Activated naive CD4-positive, alpha-beta T cell treated with anti-CD3 and anti-CD28 coated beads for 36 hours (primary cell): ENCODE measurements at regions of chr3 and their contacts with region 1.

Region 1: DNA sequence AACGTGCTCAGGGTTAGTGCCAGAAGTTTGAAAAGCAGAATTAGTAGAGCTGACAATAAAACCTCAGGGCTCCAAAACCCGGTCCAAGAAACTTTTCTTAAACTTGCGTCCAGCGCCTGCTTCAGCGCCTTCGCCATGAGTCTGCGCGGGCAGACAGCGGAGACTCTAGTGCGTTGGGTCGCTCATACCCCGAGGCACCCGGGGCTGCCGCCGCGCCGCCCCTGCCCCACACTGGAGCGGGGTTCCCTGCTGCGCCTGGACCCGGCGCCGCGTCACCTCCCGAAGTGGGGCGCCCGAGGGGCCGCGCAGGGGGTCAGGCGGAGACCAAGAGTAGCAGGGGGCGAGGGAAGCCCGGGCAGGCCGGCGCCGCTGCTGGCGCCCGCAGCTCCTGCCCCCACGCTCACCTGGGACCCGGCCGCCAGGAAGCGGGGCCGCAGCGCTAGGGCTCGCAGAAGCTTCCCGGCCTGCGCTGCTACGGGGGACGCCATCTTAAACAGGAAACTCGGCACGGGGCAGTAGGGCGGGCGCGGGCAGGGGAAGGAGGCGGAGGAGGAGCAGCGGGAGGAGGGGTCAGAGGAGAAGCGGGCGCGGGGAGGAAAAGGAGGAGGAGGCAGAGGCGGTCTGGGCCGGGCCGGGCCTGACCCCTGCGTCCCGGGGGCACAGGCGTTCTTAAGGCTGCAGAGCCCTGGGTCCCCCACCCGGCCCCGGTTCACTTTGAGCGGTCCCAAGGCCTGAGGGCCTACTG is at the start of gene SUCLG2:
- DNase-seq: peak; percentile 92
- H3K4me3 Mint-ChIP-seq: peak within 1 kb of the TSS; percentile 76
- H3K27ac Mint-ChIP-seq: peak within 1 kb of the TSS; percentile 87
- H3K4me1 Mint-ChIP-seq: peaks cover 56% of the 10 kb centered on the region
- H3K27me3 Mint-ChIP-seq: no peaks in the 10 kb centered on the region
- total RNA-seq, gene SUCLG2: 81.3 to 85.3 TPM

Region 2: GRCh38 chr3:66220602-66221377 is 1433.5 kb before region 1 on chr3 and contains the start of gene SLC25A26:
- CTCF ChIA-PET with region 1: no interaction called
- intact Hi-C with region 1: loop called (anchors 10 kb)
- DNase-seq: peak; percentile 99
- H3K4me3 Mint-ChIP-seq: peak within 1 kb of the TSS; percentile 91
- H3K27ac Mint-ChIP-seq: peak within 1 kb of the TSS; percentile 95
- H3K4me1 Mint-ChIP-seq: peaks cover 51% of the 10 kb centered on the region
- H3K27me3 Mint-ChIP-seq: no peaks in the 10 kb centered on the region
- total RNA-seq, gene SLC25A26: 25.3 to 26.3 TPM

Region 3: DNA sequence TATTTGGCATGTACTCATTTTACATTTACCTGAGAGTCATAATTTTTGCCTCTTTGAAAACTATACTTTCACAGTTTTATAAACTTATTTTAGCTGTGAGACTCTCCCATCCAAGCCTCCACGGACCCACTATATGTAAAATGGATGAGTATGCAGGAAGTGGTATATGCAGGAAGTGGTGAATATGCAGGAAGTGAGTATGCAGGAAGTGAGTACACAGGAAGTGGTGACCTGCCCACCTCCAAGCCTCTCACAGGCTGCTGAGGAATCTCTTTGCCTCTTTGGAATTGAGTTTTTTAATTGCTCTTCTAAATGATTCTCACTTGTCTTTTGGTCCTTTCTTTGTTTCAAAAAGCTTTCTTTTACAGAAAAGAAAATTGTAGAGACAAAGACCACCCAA is 571.0 kb before region 1 on chr3:
- CTCF ChIA-PET with region 1: no interaction called
- intact Hi-C with region 1: loop called (anchors 1 kb)
- DNase-seq: peak; percentile 79
- H3K4me3 Mint-ChIP-seq: peak overlapping the region; percentile 61
- H3K27ac Mint-ChIP-seq: peak overlapping the region; percentile 94
- H3K4me1 Mint-ChIP-seq: peaks cover 31% of the 10 kb centered on the region
- H3K27me3 Mint-ChIP-seq: no peaks in the 10 kb centered on the region

Region 4: DNA sequence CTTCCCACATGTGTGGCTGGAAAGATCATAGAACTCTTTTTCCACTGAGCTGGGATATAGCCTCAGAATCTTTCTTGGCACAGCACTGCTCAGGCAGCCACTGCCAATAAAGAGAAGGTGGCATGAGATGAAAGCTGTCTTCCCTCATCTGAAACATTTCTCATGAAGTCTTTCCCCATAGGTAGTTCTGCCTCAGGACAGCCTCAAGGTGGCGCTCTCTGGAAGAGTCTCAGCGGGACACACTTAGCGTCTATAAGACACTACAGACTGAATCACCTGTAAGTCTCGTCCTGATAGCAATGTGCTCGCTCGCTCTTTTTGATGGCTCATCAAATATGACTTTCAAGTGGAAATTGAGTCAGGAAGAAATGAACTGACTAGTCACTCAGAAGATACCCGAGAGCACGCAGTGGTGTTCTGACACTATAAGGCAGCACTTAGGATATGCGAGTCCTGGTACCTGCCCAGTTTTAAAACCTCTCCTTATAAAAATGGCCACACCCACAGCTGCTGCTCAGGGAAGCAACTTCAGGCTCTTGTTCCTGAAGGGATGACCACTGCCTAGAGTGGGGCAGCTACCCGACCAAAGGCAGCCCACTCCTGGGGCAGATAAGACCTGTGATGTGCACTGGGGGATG is 269.4 kb before region 1 on chr3:
- CTCF ChIA-PET with region 1: interaction called, 4 read pairs
- intact Hi-C with region 1: loop called (anchors 5 kb)
- DNase-seq: peak; percentile 67
- H3K4me3 Mint-ChIP-seq: no peak overlapping the region
- H3K27ac Mint-ChIP-seq: no peak overlapping the region
- H3K4me1 Mint-ChIP-seq: peaks cover 31% of the 10 kb centered on the region
- H3K27me3 Mint-ChIP-seq: no peaks in the 10 kb centered on the region

Region 5: GRCh38 chr3:67593761-67594244 is 60.5 kb before region 1 on chr3:
- CTCF ChIA-PET with region 1: no interaction called
- intact Hi-C with region 1: no loop called
- DNase-seq: no peak
- H3K4me3 Mint-ChIP-seq: no peak overlapping the region
- H3K27ac Mint-ChIP-seq: no peak overlapping the region
- H3K4me1 Mint-ChIP-seq: peaks cover 53% of the 10 kb centered on the region
- H3K27me3 Mint-ChIP-seq: no peaks in the 10 kb centered on the region

Region 6: DNA sequence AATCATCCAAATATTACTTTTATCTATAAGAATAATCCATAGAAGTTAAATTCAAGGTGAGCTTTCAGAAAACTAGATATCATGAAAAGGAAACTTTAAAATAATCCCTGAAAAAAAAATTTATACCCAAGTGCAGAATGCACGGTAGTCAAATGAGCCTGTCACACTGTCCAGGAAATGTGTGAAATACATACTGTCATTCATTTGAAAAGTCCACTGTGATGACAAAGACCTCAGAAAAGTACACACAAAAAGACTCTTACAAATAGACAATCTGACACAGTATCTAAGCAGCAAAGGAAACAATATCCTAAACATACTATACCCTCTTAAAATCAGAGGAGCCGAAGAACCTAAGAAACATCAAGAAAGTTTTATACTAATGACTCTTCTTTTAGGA is 29.6 kb before region 1 on chr3:
- CTCF ChIA-PET with region 1: no interaction called
- intact Hi-C with region 1: no loop called
- DNase-seq: no peak
- H3K4me3 Mint-ChIP-seq: no peak overlapping the region
- H3K27ac Mint-ChIP-seq: no peak overlapping the region
- H3K4me1 Mint-ChIP-seq: peaks cover 48% of the 10 kb centered on the region
- H3K27me3 Mint-ChIP-seq: no peaks in the 10 kb centered on the region

Region 7: GRCh38 chr3:67685499-67685898 is 31.2 kb after region 1 on chr3:
- CTCF ChIA-PET with region 1: interaction called, 11 read pairs
- intact Hi-C with region 1: loop called (anchors 1 kb)
- DNase-seq: peak; percentile 12
- H3K4me3 Mint-ChIP-seq: peak overlapping the region; percentile 17
- H3K27ac Mint-ChIP-seq: peak overlapping the region; percentile 54
- H3K4me1 Mint-ChIP-seq: peaks cover 32% of the 10 kb centered on the region
- H3K27me3 Mint-ChIP-seq: no peaks in the 10 kb centered on the region

Region 8: GRCh38 chr3:68088216-68088615 is 433.9 kb after region 1 on chr3:
- CTCF ChIA-PET with region 1: no interaction called
- intact Hi-C with region 1: loop called (anchors 10 kb)
- DNase-seq: peak; percentile 72
- H3K4me3 Mint-ChIP-seq: no peak overlapping the region
- H3K27ac Mint-ChIP-seq: no peak overlapping the region
- H3K4me1 Mint-ChIP-seq: peaks cover 62% of the 10 kb centered on the region
- H3K27me3 Mint-ChIP-seq: no peaks in the 10 kb centered on the region